Caco-2 (cell line): ENCODE measurements at regions of chr2 and their contacts with region 1.

Region 1: DNA sequence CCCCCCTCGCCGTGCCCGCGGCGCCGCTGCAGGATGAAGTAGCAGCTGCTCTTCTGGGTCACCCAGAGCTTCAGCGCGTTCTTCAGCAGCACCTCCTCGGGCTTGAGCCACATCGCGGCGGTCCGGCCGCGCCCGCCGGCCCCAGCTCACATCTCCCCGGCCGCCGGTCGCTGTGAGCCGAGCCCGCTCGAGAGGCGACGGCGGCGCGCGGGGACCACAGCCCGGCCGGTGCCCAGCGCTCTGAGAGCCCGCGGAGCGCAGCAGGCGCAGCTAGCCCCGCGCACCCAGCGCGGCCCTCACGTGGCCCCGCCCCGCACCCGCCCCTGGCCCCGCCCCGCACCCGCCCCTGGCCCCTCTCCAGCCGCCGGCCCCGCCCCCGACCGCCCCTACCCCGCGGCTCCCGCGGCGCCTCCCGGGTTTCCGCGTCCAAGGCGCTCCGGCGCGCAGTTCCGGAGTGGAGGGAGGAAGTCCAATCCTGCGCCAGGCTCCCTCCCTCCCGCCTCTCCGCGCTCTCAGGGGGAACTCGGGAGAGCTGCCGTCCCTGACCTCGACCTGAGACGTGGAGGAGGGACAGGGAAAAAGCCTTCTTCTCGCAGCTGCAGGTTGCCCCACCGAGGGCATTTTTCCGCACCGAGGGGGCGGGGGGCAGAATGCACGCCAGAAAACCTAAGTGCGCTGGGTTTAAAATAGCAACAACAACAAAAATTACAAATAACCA is at the start of gene TBC1D8:
- DNase-seq: peak; percentile 92
- H3K4me3 ChIP-seq: peak within 1 kb of the TSS; percentile 86
- H3K4me3 Mint-ChIP-seq: peak within 1 kb of the TSS; percentile 57
- H3K27ac Mint-ChIP-seq: peak within 1 kb of the TSS; percentile 4
- H3K4me1 ChIP-seq: peaks cover 15% of the 10 kb centered on the region
- H3K4me1 Mint-ChIP-seq: peaks cover 42% of the 10 kb centered on the region
- H3K27me3 ChIP-seq: no peaks in the 10 kb centered on the region
- H3K27me3 Mint-ChIP-seq: no peaks in the 10 kb centered on the region
- CTCF ChIP-seq: no peak
- total RNA-seq, gene TBC1D8: 29.3 and 29.5 TPM in 2 replicates

Region 2: GRCh38 chr2:101012706-101013181 is 138.6 kb before region 1 on chr2:
- CTCF ChIA-PET with region 1: interaction called, 32 read pairs
- POLR2A ChIA-PET with region 1: no interaction called
- intact Hi-C with region 1: loop called (anchors 1 kb)
- DNase-seq: peak in 1 of 2 experiments; percentile 62
- H3K4me3 ChIP-seq: no peak overlapping the region
- H3K4me3 Mint-ChIP-seq: no peak overlapping the region
- H3K27ac Mint-ChIP-seq: peak overlapping the region; percentile 22
- H3K4me1 ChIP-seq: no peaks in the 10 kb centered on the region
- H3K4me1 Mint-ChIP-seq: peaks cover 11% of the 10 kb centered on the region
- H3K27me3 ChIP-seq: no peaks in the 10 kb centered on the region
- H3K27me3 Mint-ChIP-seq: no peaks in the 10 kb centered on the region
- CTCF ChIP-seq: peak; percentile 67 to 85

Region 3: GRCh38 chr2:101106453-101107181 is 44.7 kb before region 1 on chr2:
- CTCF ChIA-PET with region 1: no interaction called
- POLR2A ChIA-PET with region 1: no interaction called
- intact Hi-C with region 1: loop called (anchors 1 kb)
- DNase-seq: peak in 1 of 2 experiments; percentile 23
- H3K4me3 ChIP-seq: no peak overlapping the region
- H3K4me3 Mint-ChIP-seq: no peak overlapping the region
- H3K27ac Mint-ChIP-seq: no peak overlapping the region
- H3K4me1 ChIP-seq: peaks cover 15% of the 10 kb centered on the region
- H3K4me1 Mint-ChIP-seq: peaks cover 24% of the 10 kb centered on the region
- H3K27me3 ChIP-seq: no peaks in the 10 kb centered on the region
- H3K27me3 Mint-ChIP-seq: no peaks in the 10 kb centered on the region
- CTCF ChIP-seq: no peak

Region 4: DNA sequence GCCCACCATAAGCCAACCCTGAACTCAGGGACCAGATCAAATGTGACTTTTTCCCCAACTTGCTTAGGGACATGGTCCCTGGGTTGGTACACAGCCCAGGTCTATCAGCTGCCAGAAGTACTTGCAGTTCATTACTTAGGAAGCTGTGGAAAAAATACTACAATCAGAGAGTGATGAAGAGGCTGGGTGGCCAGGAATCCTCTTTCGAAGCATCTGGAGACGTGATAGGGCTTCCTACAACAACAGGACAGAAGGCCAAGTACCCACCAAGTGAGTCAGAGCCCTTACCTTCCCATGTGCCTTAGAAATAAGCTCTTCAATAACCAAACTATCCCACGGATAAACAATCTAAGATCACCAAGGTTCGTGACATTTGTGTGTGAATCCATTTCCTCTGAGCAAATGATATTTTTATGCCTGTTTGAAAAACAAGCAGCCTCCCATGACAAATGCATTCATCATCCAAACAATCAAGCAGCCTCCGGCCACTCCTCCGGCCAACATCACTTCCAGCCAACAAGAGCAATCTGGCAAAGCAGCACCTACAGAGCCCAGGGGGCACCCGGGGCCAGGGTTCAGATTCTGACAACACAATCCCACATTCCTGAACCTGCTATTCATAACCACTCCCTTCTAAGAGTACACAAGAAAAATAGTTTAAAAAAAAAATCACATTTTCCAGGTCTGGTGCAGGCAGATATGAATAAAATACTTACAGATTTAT is 26.5 kb before region 1 on chr2:
- CTCF ChIA-PET with region 1: interaction called, 3 read pairs
- POLR2A ChIA-PET with region 1: no interaction called
- intact Hi-C with region 1: loop called (anchors 2 kb)
- DNase-seq: peak; percentile 86 to 93
- H3K4me3 ChIP-seq: no peak overlapping the region
- H3K4me3 Mint-ChIP-seq: peak overlapping the region; percentile 64
- H3K27ac Mint-ChIP-seq: peak overlapping the region; percentile 86
- H3K4me1 ChIP-seq: peaks cover 73% of the 10 kb centered on the region
- H3K4me1 Mint-ChIP-seq: peaks cover 52% of the 10 kb centered on the region
- H3K27me3 ChIP-seq: no peaks in the 10 kb centered on the region
- H3K27me3 Mint-ChIP-seq: no peaks in the 10 kb centered on the region
- CTCF ChIP-seq: no peak

Region 5: GRCh38 chr2:101252408-101253012 is 101.2 kb after region 1 on chr2 and contains the start of gene CNOT11:
- CTCF ChIA-PET with region 1: interaction called, 3 read pairs
- POLR2A ChIA-PET with region 1: no interaction called
- intact Hi-C with region 1: loop called (anchors 1 kb)
- DNase-seq: peak; percentile 99 to 100
- H3K4me3 ChIP-seq: peak within 1 kb of the TSS; percentile 66
- H3K4me3 Mint-ChIP-seq: peak within 1 kb of the TSS; percentile 94
- H3K27ac Mint-ChIP-seq: peak within 1 kb of the TSS; percentile 83
- H3K4me1 ChIP-seq: peaks cover 27% of the 10 kb centered on the region
- H3K4me1 Mint-ChIP-seq: peaks cover 43% of the 10 kb centered on the region
- H3K27me3 ChIP-seq: no peaks in the 10 kb centered on the region
- H3K27me3 Mint-ChIP-seq: no peaks in the 10 kb centered on the region
- CTCF ChIP-seq: no peak
- total RNA-seq, gene CNOT11: 110 and 120 TPM in 2 replicates